ENCODE measurements at regions of chr1 and their contacts with region 1.

Region 1: DNA sequence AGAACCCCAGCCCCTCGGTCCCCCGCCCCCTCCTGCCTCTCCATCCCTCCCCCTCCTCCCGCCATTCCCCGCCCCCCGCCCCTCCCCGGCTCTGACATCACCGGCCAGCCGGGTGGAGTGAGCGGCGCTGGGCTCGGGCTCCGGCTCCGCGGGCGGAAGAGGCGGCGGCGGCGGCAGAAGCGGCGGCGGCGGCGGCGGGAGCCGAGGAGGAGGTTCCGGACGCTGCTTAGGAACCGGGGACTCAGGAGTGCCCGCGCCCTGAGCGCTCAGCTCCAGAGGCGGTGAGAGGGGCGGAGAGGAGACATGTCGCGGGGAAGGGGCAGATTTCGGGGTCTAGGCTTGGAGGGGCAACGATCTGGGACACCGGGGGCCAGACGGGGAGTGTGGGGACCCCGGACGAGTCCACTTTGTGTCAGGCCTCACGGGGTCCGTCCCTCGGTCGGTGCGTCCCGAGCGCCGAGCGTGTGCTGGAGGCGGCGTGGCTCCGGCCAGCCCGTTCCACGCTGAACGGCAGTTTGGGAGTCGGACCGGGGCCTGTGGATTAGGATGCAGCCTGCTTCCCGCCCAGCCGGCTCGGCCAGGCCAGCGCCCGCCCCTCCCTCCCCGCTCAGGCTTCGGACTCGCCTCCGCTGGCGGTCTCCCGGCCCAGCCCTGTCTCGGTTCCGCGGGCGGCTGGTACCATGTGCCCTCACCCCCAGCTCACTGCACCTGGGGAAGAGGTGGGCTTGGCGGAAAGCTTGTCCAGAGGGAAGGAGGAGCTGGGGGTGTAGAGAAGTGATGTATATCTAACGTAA is at the start of gene PEA15:
- DNase-seq: peak; percentile 83
- ATAC-seq: peak; percentile 76
- H3K4me3 Mint-ChIP-seq: peak within 1 kb of the TSS; percentile 81
- H3K27ac Mint-ChIP-seq: peak within 1 kb of the TSS; percentile 86
- H3K4me1 Mint-ChIP-seq: peaks cover 47% of the 10 kb centered on the region
- H3K27me3 Mint-ChIP-seq: no peaks in the 10 kb centered on the region
- total RNA-seq, gene PEA15: 42.5 to 63.4 TPM

Region 2: DNA sequence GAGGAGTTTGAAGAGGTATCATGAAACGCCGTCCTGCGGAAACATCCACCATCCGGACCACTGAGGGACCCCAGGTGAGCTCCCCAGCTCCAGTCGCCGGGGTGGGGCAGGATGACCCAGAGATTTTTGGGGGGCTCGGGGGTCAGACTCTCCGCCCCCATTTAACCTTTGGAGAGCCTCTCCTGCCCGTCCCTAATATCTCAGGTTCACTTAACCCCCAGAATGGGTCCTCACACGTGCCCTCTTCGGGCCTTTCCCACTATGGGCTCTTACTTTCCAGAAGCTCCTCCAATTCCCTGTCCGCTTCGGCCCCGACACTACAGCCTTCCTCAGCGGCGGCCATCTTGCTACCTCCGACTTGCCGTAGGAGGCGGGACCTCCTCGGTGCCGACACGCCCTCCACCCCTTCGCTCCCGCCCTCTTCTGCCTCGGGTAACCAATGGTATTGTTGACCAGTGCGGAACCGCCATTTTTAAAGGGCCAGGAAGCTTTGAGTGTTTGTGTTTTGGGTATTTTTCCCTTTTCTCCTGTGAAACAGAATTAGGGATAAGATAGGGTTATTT is 79.4 kb after region 1 on chr1 and contains the start of gene PEX19:
- CTCF ChIA-PET with region 1: interaction called, 3 read pairs
- POLR2A ChIA-PET with region 1: no interaction called
- intact Hi-C with region 1: loop called (anchors 1 kb)
- DNase-seq: peak; percentile 97
- ATAC-seq: peak; percentile 99
- H3K4me3 Mint-ChIP-seq: peak within 1 kb of the TSS; percentile 86
- H3K27ac Mint-ChIP-seq: peak within 1 kb of the TSS; percentile 94
- H3K4me1 Mint-ChIP-seq: peaks cover 18% of the 10 kb centered on the region
- H3K27me3 Mint-ChIP-seq: no peaks in the 10 kb centered on the region
- total RNA-seq, gene PEX19: 49.2 to 55.8 TPM